ENCODE measurements at regions of chr11 and their contacts with region 1.

Region 1: DNA sequence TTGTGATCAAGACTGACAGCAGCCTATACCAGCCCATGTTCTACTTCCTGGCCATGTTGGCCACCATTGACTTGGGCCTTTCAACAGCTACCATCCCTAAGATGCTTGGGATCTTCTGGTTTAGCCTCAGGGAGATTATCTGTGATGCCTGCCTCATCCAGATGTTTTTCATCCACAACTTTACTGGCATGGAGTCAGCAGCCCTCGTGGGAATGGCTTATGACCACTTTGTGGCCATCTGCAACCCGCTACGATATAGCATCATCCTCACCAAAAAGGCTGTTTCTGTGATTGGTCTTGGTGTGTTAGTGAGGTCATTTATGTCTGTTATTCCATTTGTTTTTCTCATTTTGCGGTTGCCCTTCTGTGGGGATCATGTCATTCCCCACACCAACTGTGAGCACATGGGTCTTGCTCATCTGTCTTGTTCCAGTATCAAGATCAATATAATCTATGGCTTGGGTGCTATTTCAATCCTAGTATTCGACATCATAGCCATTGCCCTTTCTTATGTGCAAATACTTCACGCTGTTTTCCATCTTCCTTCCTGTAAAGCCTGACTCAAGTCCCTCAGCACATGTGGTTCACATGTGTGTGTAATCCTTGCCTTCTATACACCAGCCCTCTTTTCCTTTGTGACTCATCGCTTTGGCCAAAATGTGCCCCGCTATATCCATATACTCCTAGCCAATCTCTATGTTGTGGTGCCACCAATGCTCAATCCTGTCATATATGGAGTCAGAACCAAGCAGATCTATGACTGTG is 23.6 kb downstream of the OR52E1 start:
- DNase-seq: no peak
- H3K4me3 Mint-ChIP-seq: no peak overlapping the region
- H3K27ac Mint-ChIP-seq: no peak overlapping the region
- H3K4me1 Mint-ChIP-seq: no peaks in the 10 kb centered on the region
- H3K27me3 Mint-ChIP-seq: peaks cover 59% of the 10 kb centered on the region
- CTCF ChIP-seq: no peak

Region 2: DNA sequence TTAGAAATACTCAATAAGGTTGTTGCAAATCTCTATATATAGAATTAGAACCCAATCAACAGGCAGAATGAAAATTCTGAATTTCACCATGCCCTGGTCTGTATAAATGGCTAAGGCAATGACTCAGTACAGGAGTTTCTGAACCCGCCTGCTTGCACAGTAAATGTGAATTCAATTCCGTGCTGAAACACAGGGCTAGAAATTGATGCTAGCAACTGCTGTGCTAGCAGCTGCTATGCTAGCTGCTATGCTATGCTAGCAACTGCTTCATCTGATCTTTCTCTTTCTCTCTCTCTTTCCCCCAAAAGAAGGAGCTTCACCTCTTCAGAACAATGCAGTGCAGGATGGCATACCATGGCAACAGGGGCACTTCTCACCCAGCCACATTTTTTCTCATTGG is 56.3 kb before region 1 on chr11:
- CTCF ChIA-PET with region 1: no interaction called
- POLR2A ChIA-PET with region 1: no interaction called
- intact Hi-C with region 1: loop called (anchors 10 kb)
- DNase-seq: no peak
- H3K4me3 Mint-ChIP-seq: no peak overlapping the region
- H3K27ac Mint-ChIP-seq: no peak overlapping the region
- H3K4me1 Mint-ChIP-seq: no peaks in the 10 kb centered on the region
- H3K27me3 Mint-ChIP-seq: peaks cover 20% of the 10 kb centered on the region
- CTCF ChIP-seq: no peak